PC-3 (cell line): ENCODE measurements at regions of chr3 and their contacts with region 1.

Region 1: GRCh38 chr3:172138795-172139441 is 99.5 kb downstream of the FNDC3B start:
- DNase-seq: peak; percentile 64
- ATAC-seq: no peak
- H3K4me3 ChIP-seq: peak overlapping the region; percentile 13; the same call in 1 of the 2 replicates
- H3K27ac ChIP-seq: peak overlapping the region; percentile 91
- H3K4me1 ChIP-seq: peaks cover 93% of the 10 kb centered on the region
- H3K27me3 ChIP-seq: no peaks in the 10 kb centered on the region
- CTCF ChIP-seq: no peak

Region 2: GRCh38 chr3:171809821-171810628 is 328.9 kb before region 1 on chr3 and contains the start of gene PLD1:
- CTCF ChIA-PET with region 1: no interaction called
- POLR2A ChIA-PET with region 1: no interaction called
- intact Hi-C with region 1: loop called (anchors 5 kb)
- DNase-seq: peak; percentile 80
- ATAC-seq: peak; percentile 59
- H3K4me3 ChIP-seq: peak within 1 kb of the TSS; percentile 78
- H3K27ac ChIP-seq: peak within 1 kb of the TSS; percentile 90
- H3K4me1 ChIP-seq: peaks cover 50% of the 10 kb centered on the region
- H3K27me3 ChIP-seq: no peaks in the 10 kb centered on the region
- CTCF ChIP-seq: no peak
- total RNA-seq, gene PLD1: 7.3 and 8.3 TPM in 2 replicates

Region 3: DNA sequence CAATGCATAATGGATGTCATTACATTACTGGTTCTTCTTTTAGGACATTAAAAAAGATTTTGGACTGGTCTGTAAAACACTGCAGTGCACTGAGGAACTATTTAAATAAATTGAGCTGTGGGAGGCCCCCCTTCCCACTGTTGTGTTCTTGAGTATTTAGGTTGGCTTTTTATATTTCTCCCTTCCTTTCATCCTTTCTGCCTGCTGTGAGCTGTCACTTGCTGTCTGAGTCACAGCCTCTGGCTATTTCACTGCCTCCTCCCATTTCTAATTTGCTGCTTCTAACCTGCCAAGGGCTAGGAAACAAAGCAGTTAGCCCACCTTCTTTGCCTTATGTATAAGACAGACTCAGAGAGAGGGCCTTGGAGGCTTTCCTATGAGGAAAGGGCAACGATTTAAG is 188.5 kb before region 1 on chr3:
- CTCF ChIA-PET with region 1: no interaction called
- POLR2A ChIA-PET with region 1: no interaction called
- intact Hi-C with region 1: loop called (anchors 2 kb)
- DNase-seq: peak; percentile 76
- ATAC-seq: peak; percentile 53
- H3K4me3 ChIP-seq: no peak overlapping the region
- H3K27ac ChIP-seq: peak overlapping the region; percentile 38
- H3K4me1 ChIP-seq: peaks cover 68% of the 10 kb centered on the region
- H3K27me3 ChIP-seq: no peaks in the 10 kb centered on the region
- CTCF ChIP-seq: no peak

Region 4: GRCh38 chr3:172153335-172153861 is 14.5 kb after region 1 on chr3:
- CTCF ChIA-PET with region 1: no interaction called
- POLR2A ChIA-PET with region 1: interaction called, 4 read pairs
- intact Hi-C with region 1: loop called (anchors 1 kb)
- DNase-seq: peak; percentile 97
- ATAC-seq: peak; percentile 98
- H3K4me3 ChIP-seq: peak overlapping the region; percentile 36; the same call in 1 of the 2 replicates
- H3K27ac ChIP-seq: peak overlapping the region; percentile 92
- H3K4me1 ChIP-seq: peaks cover 71% of the 10 kb centered on the region
- H3K27me3 ChIP-seq: no peaks in the 10 kb centered on the region
- CTCF ChIP-seq: no peak

Region 5: GRCh38 chr3:172171396-172172075 is 32.6 kb after region 1 on chr3:
- CTCF ChIA-PET with region 1: interaction called, 3 read pairs
- POLR2A ChIA-PET with region 1: no interaction called
- intact Hi-C with region 1: loop called (anchors 1 kb)
- DNase-seq: no peak
- ATAC-seq: no peak
- H3K4me3 ChIP-seq: no peak overlapping the region
- H3K27ac ChIP-seq: no peak overlapping the region
- H3K4me1 ChIP-seq: peaks cover 27% of the 10 kb centered on the region
- H3K27me3 ChIP-seq: no peaks in the 10 kb centered on the region
- CTCF ChIP-seq: no peak

Region 6: GRCh38 chr3:172201136-172201869 is 62.4 kb after region 1 on chr3:
- CTCF ChIA-PET with region 1: no interaction called
- POLR2A ChIA-PET with region 1: no interaction called
- intact Hi-C with region 1: loop called (anchors 5 kb)
- DNase-seq: no peak
- ATAC-seq: no peak
- H3K4me3 ChIP-seq: no peak overlapping the region
- H3K27ac ChIP-seq: no peak overlapping the region
- H3K4me1 ChIP-seq: peaks cover 36% of the 10 kb centered on the region
- H3K27me3 ChIP-seq: no peaks in the 10 kb centered on the region
- CTCF ChIP-seq: no peak